Cardiac septum (tissue), 1 donor: ENCODE measurements at regions of chr6 and their contacts with region 1.

Region 1: GRCh38 chr6:138538390-138539031 is 39.2 kb upstream of the NHSL1 start:
- DNase-seq: no peak

Region 2: GRCh38 chr6:138572167-138572865 is 33.8 kb after region 1 on chr6:
- intact Hi-C with region 1: loop called (anchors 5 kb)
- DNase-seq: peak; percentile 83